ENCODE measurements at regions of chrX and their contacts with region 1.

Region 1: DNA sequence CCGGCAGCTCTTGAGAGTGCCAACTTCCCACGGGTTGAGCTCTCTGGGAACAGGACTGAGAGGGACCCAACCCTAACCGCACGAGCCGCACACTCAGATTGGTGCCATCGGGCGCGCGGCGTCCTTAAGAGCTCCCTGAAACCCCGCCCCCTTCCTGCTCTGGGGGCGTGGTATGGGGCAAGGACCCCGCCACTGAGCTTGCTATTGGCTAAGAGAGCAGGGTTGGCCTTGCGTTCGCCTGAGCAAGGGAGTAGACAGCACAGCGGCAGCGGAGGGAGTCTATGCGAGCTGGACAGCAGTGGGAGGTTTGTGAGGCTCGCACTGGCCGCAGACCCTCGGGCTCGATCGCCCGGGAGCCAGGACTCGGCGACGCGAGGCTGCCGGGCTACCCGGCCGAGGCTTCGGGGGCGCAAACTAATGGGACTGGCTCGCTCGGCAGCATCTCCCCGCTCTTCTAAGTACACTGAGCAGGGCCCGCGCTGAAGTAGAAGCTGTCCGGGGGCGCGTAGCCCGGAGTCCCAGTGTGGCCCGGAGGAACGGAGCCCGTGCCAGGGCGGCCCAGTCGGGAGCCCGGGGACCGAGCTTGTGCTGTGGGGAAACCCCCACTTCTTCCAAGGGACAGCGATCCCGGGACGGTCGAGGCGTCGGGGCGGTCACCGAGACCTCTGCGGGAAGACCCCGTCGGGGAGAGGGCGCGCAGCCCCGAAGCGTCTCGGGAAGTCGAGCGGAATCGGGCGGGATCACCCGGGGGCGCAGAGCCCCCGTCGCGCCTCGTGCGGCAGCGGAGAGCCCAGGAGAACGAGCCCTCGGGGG is at the start of gene EFNB1:
- DNase-seq: peak; percentile 77 to 78
- H3K4me3 ChIP-seq: peak within 1 kb of the TSS; percentile 40 to 67 (median 45)
- H3K27ac ChIP-seq: no peak within 1 kb of the TSS
- H3K4me1 ChIP-seq: peaks cover 0 to 14% (median 3%) of the 10 kb centered on the region in 4 experiments; a peak in 5 of 7 replicates
- H3K27me3 ChIP-seq: peaks cover 30 to 84% (median 71%) of the 10 kb centered on the region in 4 experiments
- CTCF ChIP-seq: no peak
- EP300 ChIP-seq: no peak
- POLR2A ChIP-seq: peak in 1 of 2 experiments; percentile 73; a peak in 2 of 3 replicates
- RAD21 ChIP-seq: 0 out of 4 replicates have a peak, but pooled peaks of 1 of the 2 experiments have one; percentile 2
- total RNA-seq, gene EFNB1: 2.3 and 3.0 TPM in 2 replicates

Region 2: DNA sequence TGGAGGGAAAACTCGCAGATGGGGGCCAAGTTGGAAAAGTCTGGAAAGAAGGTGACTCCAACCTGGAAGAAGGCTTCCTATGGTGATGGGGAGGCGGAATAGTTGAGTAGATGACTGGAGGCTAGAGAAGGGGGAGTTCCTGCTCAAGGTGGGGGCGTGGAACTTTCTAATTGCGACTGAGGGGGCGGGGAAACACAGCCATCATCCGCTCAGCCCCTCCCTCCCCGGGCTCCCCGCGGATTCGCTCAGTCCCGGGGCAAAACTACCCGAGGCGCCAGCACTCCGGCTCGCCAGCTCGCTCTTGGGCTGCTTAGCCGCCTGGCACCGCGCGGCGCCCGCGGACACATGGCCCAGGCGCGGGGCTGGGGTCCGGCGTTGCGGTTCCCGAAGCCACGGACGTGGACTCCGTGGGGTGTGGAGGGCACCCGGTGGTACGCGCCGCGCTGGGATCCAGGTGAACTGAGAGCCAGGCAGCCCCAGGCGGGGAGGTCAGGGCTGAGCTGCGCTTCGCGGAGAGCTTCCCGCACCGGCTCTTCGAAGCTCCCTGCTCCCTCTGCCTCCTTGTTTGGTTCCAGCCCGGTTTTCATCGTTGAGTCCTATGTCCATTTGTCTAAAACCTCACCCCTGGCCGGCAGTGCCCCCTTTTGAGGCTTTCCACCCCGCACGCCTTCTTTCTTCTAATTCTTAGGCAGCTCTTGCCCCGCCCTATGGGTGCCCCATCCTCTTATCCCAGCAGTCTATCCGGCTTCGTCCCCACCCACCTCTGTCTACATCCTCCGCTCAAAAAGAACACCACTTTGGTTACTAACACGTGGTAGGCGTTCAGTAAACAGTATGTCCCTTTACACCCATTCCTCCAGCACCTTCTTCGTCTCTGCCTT is 142.6 kb before region 1 on chrX:
- CTCF ChIA-PET with region 1: no interaction called
- POLR2A ChIA-PET with region 1: no interaction called
- DNase-seq: peak in 1 of 2 experiments; percentile 65
- H3K4me3 ChIP-seq: peak overlapping the region; percentile 26 to 56 (median 34); a peak in 6 of 8 replicates
- H3K27ac ChIP-seq: no peak overlapping the region
- H3K4me1 ChIP-seq: peaks cover 2 to 6% (median 4%) of the 10 kb centered on the region in 4 experiments; a peak in 6 of 7 replicates
- H3K27me3 ChIP-seq: peaks cover 0 to 11% (median 7%) of the 10 kb centered on the region in 4 experiments; a peak in 3 of 7 replicates
- CTCF ChIP-seq: no peak
- EP300 ChIP-seq: no peak
- POLR2A ChIP-seq: peak in 1 of 2 experiments; percentile 58; a peak in 1 of 3 replicates
- RAD21 ChIP-seq: no peak

Region 3: DNA sequence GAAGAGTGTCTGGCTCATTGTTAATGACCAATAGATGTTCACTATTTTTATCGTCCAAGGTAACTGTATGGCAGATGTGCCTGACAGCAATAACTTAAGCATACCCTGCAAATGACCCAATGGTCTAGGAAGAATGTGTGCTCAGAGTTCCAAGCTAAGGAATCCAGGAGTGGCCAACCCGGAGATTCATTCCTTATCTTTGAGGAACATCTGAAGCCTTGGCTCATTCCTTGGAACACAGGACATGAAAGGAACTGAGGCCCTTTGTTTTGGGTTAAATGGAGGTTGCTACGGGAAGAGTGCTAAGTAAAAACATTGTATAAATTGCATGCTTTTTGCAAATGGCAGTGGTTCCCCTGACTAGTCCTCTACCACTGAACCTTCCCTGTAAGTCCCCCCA is 39.0 kb before region 1 on chrX:
- CTCF ChIA-PET with region 1: no interaction called
- POLR2A ChIA-PET with region 1: no interaction called
- DNase-seq: no peak
- H3K4me3 ChIP-seq: no peak overlapping the region
- H3K27ac ChIP-seq: no peak overlapping the region
- H3K4me1 ChIP-seq: no peaks in the 10 kb centered on the region
- H3K27me3 ChIP-seq: no peaks in the 10 kb centered on the region
- CTCF ChIP-seq: no peak
- EP300 ChIP-seq: no peak
- POLR2A ChIP-seq: no peak
- RAD21 ChIP-seq: no peak

Region 4: GRCh38 chrX:68912113-68912512 is 83.2 kb after region 1 on chrX:
- CTCF ChIA-PET with region 1: interaction called, 11 read pairs
- POLR2A ChIA-PET with region 1: interaction called, 6 read pairs
- DNase-seq: no peak
- H3K4me3 ChIP-seq: peak overlapping the region; percentile 14 to 56 (median 18); a peak in 6 of 8 replicates
- H3K27ac ChIP-seq: no peak overlapping the region
- H3K4me1 ChIP-seq: peaks cover 3 to 32% (median 10%) of the 10 kb centered on the region in 4 experiments
- H3K27me3 ChIP-seq: peaks cover 0 to 2% (median 0%) of the 10 kb centered on the region in 4 experiments; a peak in 1 of 7 replicates
- CTCF ChIP-seq: no peak
- EP300 ChIP-seq: no peak
- POLR2A ChIP-seq: no peak
- RAD21 ChIP-seq: no peak

Region 5: DNA sequence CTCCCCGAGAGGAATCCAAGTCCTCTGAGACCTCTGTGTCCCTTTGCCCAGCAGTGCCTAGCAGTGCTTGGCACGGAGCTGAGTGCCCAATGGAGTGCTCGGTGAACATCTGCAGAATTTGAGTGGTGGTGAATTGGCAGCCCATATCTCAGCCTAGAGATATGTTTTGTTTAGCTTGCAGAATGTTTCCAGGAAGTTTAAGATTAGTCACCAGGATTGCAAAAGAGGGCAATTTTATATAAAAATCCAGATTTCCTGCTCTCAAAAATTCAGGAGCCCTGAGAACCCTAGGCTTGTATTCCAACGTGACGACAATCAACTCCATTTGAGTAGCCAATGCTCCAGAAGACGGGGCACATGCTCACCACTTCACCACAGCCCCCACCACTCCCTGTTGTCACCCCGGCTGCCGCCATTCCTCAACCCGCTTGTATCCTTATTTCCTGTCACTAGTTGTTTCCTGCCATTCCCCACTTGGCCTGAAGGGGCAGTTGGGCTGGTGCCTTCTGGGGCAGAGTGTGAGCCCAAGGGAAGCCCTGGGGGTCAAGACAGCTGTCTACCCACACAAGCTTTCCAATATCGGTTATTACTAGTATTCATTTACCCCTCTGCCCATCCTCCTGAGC is 116.8 kb after region 1 on chrX:
- CTCF ChIA-PET with region 1: interaction called, 14 read pairs
- POLR2A ChIA-PET with region 1: interaction called, 3 read pairs
- DNase-seq: peak in 1 of 2 experiments; percentile 53
- H3K4me3 ChIP-seq: no peak overlapping the region
- H3K27ac ChIP-seq: no peak overlapping the region
- H3K4me1 ChIP-seq: 0 out of 7 replicates have a peak, but pooled peaks cover 0 to 1% (median 0%) of the 10 kb centered on the region in 4 experiments
- H3K27me3 ChIP-seq: no peaks in the 10 kb centered on the region
- CTCF ChIP-seq: peak; percentile 42 to 60 (median 54)
- EP300 ChIP-seq: no peak
- POLR2A ChIP-seq: no peak
- RAD21 ChIP-seq: peak; percentile 29 to 56; a peak in 3 of 4 replicates

Region 6: DNA sequence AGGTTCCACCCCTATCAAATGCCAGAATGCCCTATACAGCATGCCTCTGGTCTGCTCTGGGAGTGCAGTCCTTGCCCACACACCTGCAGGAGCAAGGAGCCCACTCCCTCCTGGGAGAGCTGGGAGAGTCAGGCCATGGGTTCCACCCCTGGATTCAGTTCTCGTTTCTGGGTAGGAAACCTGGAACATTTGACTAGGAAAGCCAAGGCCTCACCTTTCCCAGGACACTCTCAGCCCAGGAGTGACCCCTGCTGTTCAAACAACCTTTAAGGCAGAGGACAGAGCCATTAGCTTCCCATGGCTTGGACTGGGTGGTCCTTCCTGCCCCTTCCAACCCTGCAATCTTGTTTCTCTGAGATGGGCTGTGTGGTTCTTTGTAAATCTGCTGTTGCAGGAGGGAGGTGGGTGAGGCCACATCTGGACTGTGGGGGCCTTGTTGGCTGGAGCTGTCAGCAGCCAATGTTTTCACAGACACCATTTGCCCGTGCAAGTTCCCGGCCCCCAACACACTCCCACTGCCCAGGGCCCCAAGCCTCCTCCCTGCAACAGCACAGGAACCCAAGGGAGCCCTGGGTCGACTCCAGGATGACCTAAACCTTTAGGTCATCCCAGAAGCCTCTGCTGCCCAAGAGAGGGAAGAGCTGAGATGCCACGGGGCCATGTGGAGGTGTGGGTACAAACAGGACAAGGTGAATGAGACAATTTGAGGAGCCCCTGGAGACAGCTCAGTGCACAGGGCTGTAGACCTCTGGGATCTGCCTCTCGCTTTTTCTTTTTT is 231.9 kb after region 1 on chrX:
- CTCF ChIA-PET with region 1: interaction called, 10 read pairs
- POLR2A ChIA-PET with region 1: no interaction called
- DNase-seq: peak in 1 of 2 experiments; percentile 45
- H3K4me3 ChIP-seq: no peak overlapping the region
- H3K27ac ChIP-seq: no peak overlapping the region
- H3K4me1 ChIP-seq: no peaks in the 10 kb centered on the region
- H3K27me3 ChIP-seq: no peaks in the 10 kb centered on the region
- CTCF ChIP-seq: peak in 2 of 3 experiments; percentile 16 to 32; a peak in 2 of 4 replicates
- EP300 ChIP-seq: no peak
- POLR2A ChIP-seq: no peak
- RAD21 ChIP-seq: peak; percentile 60 to 72

Region 7: GRCh38 chrX:69083334-69083733 is 254.4 kb after region 1 on chrX:
- CTCF ChIA-PET with region 1: interaction called, 21 read pairs
- POLR2A ChIA-PET with region 1: no interaction called
- DNase-seq: no peak
- H3K4me3 ChIP-seq: no peak overlapping the region
- H3K27ac ChIP-seq: no peak overlapping the region
- H3K4me1 ChIP-seq: peaks cover 0 to 8% (median 0%) of the 10 kb centered on the region in 4 experiments; a peak in 4 of 7 replicates
- H3K27me3 ChIP-seq: no peaks in the 10 kb centered on the region; a peak in 1 of 7 replicates
- CTCF ChIP-seq: no peak
- EP300 ChIP-seq: no peak
- POLR2A ChIP-seq: no peak
- RAD21 ChIP-seq: no peak

Measured in H1 (cell line).